Activated naive CD4-positive, alpha-beta T cell treated with anti-CD3 and anti-CD28 coated beads, Interleukin-2, amount 10 ng/mL, durations not matched to agents 7 days and 5 days (primary cell): ENCODE measurements at regions of chr13 and their contacts with region 1.

Region 1: GRCh38 chr13:97911311-97912128 is 42.0 kb upstream of the IPO5 start:
- DNase-seq: no peak
- H3K4me3 Mint-ChIP-seq: no peak overlapping the region
- H3K27ac Mint-ChIP-seq: no peak overlapping the region
- H3K4me1 Mint-ChIP-seq: no peaks in the 10 kb centered on the region
- H3K27me3 Mint-ChIP-seq: peaks cover 5% of the 10 kb centered on the region

Region 2: GRCh38 chr13:97855570-97856303 is 55.8 kb before region 1 on chr13:
- CTCF ChIA-PET with region 1: interaction called, 18 read pairs
- DNase-seq: peak; percentile 27
- H3K4me3 Mint-ChIP-seq: no peak overlapping the region
- H3K27ac Mint-ChIP-seq: no peak overlapping the region
- H3K4me1 Mint-ChIP-seq: no peaks in the 10 kb centered on the region
- H3K27me3 Mint-ChIP-seq: peaks cover 3% of the 10 kb centered on the region

Region 3: DNA sequence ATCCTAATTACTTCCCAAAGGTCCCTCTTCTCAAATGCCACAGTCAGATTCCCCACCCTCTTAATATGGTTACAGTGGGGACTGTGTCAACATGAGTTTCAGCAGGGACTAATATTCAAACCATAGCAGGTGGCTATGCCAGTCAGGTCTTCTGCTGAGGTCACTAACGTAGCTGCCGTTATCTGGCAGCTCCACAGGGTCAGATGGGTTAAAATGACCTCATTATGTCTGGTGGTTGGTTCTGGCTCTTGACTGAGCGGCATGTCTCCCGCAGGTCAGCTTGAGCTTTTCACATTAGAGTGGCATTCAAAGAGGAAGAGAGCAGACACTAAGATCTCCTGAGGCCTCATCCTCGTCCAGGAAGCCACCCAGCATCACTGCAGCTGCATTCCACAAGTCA is 20.5 kb after region 1 on chr13:
- CTCF ChIA-PET with region 1: no interaction called
- DNase-seq: no peak
- H3K4me3 Mint-ChIP-seq: no peak overlapping the region
- H3K27ac Mint-ChIP-seq: no peak overlapping the region
- H3K4me1 Mint-ChIP-seq: no peaks in the 10 kb centered on the region
- H3K27me3 Mint-ChIP-seq: peaks cover 5% of the 10 kb centered on the region